Posterior vena cava (tissue), 2 donors: ENCODE measurements at regions of chr3 and their contacts with region 1.

Region 1: GRCh38 chr3:100463002-100463401 is 29.4 kb upstream of the TMEM45A start:
- DNase-seq: no peak

Region 2: GRCh38 chr3:99783009-99783573 is 679.9 kb before region 1 on chr3:
- intact Hi-C with region 1: no loop called
- DNase-seq: no peak

Region 3: DNA sequence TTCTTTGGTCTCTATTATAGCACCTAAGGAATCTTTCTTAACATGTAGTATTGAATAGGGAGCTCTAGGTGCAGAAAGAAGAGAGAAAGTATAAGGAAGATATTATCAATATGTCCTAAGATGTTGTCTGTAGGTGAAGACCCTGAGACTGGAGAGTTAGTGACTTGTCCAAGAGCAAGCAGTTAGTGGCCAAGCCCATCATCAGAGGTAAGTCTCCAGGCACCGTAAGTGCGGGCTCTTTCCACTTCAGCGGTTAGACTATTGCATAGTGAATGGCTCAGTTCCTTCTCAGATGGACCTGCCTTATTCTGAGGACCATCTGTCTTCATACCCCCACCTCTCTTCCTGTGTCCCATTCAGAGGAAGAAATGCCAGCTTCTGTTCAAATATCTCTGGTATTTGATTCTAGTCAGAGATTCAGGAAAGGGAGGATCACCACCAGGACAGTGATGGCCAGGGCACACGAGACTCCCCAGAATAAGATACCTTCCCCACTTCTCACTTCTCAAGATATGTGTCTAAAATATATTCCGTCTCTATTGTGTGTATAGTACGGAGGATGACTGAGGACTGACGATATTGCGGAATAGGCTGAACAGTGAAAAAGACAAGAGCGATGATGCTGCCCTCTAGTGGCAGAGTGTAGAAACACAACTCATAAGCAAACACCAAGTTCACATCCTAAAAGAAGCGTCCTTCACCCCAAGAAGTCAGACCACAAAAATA is 127.3 kb after region 1 on chr3:
- intact Hi-C with region 1: loop called in 1 of 2 experiments (anchors 5 kb)
- DNase-seq: no peak

Region 4: GRCh38 chr3:100603469-100603868 is 140.5 kb after region 1 on chr3:
- intact Hi-C with region 1: loop called in 1 of 2 experiments (anchors 10 kb)
- DNase-seq: no peak